Activated CD4-positive, alpha-beta T cell treated with anti-CD3 and anti-CD28 coated beads, Interleukin-2, amount 10 ng/mL, durations not matched to agents 7 days and 5 days (primary cell): ENCODE measurements at regions of chr19 and their contacts with region 1.

Region 1: GRCh38 chr19:48351341-48351752 is 12.4 kb downstream of the TMEM143 start:
- DNase-seq: peak; percentile 86
- H3K4me3 Mint-ChIP-seq: no peak overlapping the region
- H3K27ac Mint-ChIP-seq: no peak overlapping the region
- H3K4me1 Mint-ChIP-seq: peaks cover 9% of the 10 kb centered on the region
- H3K27me3 Mint-ChIP-seq: no peaks in the 10 kb centered on the region

Region 2: DNA sequence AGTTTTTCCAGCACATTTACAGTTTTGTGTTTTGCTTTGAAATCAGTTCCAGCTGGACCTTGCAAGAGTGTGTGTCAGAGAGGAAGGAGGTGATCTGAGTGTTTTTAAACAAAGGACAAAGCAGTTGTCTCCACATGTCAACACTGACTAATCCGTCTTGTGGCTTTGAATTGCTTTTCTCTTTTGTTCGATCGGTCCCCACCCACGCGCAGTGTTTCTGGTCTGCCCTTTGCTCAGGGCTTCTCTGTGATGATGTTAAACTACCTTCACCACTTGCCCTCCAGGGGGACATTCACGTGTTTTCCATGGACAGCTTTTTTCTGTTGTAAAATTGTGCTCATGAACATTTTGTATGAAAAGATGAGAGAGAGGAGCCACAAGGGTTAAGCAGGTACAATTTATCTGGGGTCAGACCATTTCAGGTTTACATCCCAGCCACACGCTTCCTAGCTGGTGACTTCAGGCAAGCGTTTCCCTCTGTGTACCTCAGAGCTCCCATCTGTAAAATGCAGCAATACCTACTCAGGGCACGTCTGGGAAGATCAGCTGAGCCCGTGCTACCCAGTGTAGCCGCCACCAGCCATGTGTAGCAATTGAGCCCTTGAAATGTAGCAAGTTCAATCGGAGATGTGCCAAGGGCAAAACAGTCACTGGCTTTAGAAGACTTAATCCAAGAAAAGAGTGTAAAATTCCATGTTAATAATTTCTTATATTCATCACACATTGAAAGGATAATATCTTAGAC is 227.3 kb before region 1 on chr19:
- CTCF ChIA-PET with region 1: no interaction called
- POLR2A ChIA-PET with region 1: no interaction called
- DNase-seq: no peak
- H3K4me3 Mint-ChIP-seq: no peak overlapping the region
- H3K27ac Mint-ChIP-seq: no peak overlapping the region
- H3K4me1 Mint-ChIP-seq: peaks cover 14% of the 10 kb centered on the region
- H3K27me3 Mint-ChIP-seq: no peaks in the 10 kb centered on the region

Region 3: DNA sequence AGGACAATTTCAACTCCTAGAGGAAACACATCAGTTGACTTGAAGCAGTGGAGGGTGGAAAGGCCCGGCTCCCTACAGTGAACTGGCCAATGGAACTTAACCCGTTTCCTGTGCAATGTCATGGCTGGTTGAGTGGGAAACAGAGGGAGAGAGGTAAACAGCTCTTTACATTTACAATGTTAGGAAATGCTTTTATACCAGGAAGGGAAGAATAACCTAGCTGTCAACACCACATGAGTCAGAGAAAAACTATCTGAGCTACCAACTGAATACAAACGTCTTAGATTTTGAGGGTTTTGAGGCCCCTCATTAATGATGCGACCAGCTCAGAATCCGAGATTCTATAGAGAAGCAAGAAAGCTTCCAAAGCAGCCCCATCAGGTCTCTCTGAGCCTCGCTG is 132.3 kb before region 1 on chr19:
- CTCF ChIA-PET with region 1: no interaction called
- POLR2A ChIA-PET with region 1: no interaction called
- DNase-seq: no peak
- H3K4me3 Mint-ChIP-seq: no peak overlapping the region
- H3K27ac Mint-ChIP-seq: no peak overlapping the region
- H3K4me1 Mint-ChIP-seq: peaks cover 4% of the 10 kb centered on the region
- H3K27me3 Mint-ChIP-seq: no peaks in the 10 kb centered on the region

Region 4: DNA sequence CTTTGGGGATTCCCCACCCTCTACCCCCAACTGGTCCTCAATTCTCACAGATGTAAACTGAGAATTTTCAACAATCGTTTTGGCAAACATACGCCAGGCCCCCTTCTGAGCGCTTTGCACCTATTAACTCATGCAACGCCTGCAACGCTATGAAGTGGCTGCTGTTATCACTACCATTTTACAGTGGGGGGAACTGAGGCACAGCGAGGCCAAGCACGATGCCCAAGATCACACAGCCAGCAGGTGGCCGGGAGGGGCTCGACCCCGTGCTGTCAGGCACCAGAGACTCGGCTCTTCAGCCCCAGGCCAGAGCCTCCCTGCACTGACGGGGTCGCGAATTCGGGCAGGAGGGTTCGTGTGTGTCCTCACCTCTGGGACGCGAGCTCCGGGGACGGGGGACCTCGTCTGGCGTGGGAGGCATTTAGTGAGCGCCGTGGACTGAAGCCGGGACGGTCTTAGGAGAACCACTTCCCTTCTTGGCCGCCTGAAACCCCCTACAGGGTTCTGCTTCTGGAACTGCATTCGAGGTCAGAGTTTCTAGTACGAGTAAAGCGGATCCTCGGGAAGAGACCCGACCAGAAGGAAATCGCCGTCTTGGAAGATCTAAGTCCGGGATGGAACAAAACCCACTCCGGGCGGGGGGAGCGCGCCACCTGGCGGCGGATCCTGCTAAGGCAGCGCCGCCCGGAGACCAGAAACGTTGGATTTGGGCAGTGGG is 60.4 kb before region 1 on chr19:
- CTCF ChIA-PET with region 1: no interaction called
- POLR2A ChIA-PET with region 1: no interaction called
- DNase-seq: peak; percentile 54
- H3K4me3 Mint-ChIP-seq: peak overlapping the region; percentile 65
- H3K27ac Mint-ChIP-seq: no peak overlapping the region
- H3K4me1 Mint-ChIP-seq: peaks cover 7% of the 10 kb centered on the region
- H3K27me3 Mint-ChIP-seq: peaks cover 7% of the 10 kb centered on the region

Region 5: DNA sequence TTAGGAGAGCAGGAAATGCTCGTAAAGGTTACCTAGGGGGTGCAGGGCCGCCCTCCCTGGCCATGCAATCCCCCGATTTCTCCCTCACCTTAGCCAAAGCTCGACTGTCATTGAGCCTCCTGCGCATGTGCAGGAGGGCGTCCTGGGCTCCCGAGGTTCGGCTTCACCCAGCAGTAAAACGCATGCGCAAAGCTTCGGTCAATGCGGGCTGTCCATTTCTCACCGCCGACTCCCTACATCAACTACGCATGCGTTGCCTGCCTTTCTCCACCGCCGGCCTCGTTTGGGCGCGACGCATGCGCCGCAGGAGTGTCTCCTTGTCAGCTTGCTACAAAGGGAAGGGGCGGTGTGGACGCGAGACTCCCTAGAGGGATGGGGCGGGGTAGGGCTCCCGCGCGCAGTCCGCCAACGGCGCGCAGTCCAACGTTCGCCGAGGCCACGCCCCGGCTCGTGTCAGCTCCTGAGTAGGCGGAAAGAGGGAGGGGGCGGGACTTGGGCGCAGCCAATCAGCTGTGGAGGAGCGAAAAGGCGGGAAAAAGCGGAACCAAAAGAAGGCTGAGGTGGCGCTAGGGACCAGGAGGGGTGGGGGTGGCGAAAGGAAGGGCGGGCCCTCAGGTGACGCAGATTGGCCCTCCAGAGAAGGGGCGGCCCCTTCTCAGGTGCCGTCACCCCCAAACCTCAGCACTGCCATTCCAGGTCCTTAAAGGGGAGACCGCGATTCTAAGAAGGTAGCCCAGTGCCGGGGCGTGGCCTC is 12.6 kb after region 1 on chr19 and contains the starts of genes SYNGR4 and TMEM143:
- CTCF ChIA-PET with region 1: interaction called, 13 read pairs
- POLR2A ChIA-PET with region 1: no interaction called
- DNase-seq: peak; percentile 99
- H3K4me3 Mint-ChIP-seq: peak within 1 kb of the TSS; percentile 79
- H3K27ac Mint-ChIP-seq: peak within 1 kb of the TSS; percentile 92
- H3K4me1 Mint-ChIP-seq: peaks cover 20% of the 10 kb centered on the region
- H3K27me3 Mint-ChIP-seq: no peaks in the 10 kb centered on the region
- total RNA-seq, gene SYNGR4: not detected
- total RNA-seq, gene TMEM143: 19.0 to 21.7 TPM

Region 6: GRCh38 chr19:48379058-48379457 is 27.7 kb after region 1 on chr19:
- CTCF ChIA-PET with region 1: no interaction called
- POLR2A ChIA-PET with region 1: no interaction called
- DNase-seq: no peak
- H3K4me3 Mint-ChIP-seq: no peak overlapping the region
- H3K27ac Mint-ChIP-seq: no peak overlapping the region
- H3K4me1 Mint-ChIP-seq: peaks cover 5% of the 10 kb centered on the region
- H3K27me3 Mint-ChIP-seq: no peaks in the 10 kb centered on the region